ENCODE measurements at regions of chr16 and their contacts with region 1.

Region 1: DNA sequence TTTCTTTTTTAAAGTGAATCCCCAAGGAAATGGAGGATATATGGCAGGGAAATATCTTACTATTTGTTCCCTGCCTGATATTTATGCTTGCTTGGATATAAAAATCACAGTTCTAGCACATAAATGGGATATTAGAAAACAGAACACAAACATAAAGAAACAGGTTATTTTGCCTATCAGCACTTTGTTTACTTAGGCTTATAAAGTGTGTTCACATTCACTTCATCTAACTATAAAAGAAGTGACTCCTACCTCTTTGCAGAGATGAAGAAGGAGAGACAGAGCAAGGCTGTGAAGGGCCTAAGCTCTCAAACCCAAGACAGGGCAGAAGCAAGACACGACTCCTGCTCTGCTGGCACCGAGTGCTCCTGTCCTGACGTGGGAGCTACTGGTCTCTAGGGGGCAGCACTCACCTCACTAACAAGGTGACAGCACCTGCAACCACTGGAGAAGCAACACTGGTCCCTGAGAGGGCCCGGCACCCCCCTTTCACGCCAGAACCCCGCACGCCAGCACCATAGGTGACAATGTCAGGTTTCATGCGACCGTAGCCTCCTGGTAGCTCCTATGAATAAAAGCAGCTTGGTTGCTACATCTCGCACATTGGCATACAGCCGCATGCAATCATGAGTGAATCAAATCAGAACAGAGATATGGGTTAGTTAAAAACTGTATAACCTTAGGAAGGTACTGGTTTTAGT is 32.0 kb downstream of the MBTPS1 start:
- DNase-seq: peak; percentile 28
- ATAC-seq: peak; percentile 90
- H3K4me3 ChIP-seq: no peak overlapping the region
- H3K27ac ChIP-seq: no peak overlapping the region
- H3K4me1 ChIP-seq: peaks cover 47% of the 10 kb centered on the region
- H3K27me3 ChIP-seq: no peaks in the 10 kb centered on the region
- CTCF ChIP-seq: peak; percentile 84 to 88 (median 84)
- EP300 ChIP-seq: no peak
- POLR2A ChIP-seq: peak; percentile 47; the same call in 1 of the 2 replicates
- RAD21 ChIP-seq: peak; percentile 73

Region 2: GRCh38 chr16:82681592-82681991 is 1403.1 kb before region 1 on chr16:
- CTCF ChIA-PET with region 1: no interaction called
- POLR2A ChIA-PET with region 1: no interaction called
- RAD21 ChIA-PET with region 1: no interaction called
- SMC1A ChIA-PET with region 1: no interaction called
- in situ Hi-C with region 1: no loop called
- intact Hi-C with region 1: no loop called
- DNase-seq: no peak
- ATAC-seq: no peak
- H3K4me3 ChIP-seq: no peak overlapping the region
- H3K27ac ChIP-seq: no peak overlapping the region
- H3K4me1 ChIP-seq: no peaks in the 10 kb centered on the region
- H3K27me3 ChIP-seq: peaks cover 0 to 1% of the 10 kb centered on the region in 2 experiments; a peak in 1 of 4 replicates
- CTCF ChIP-seq: no peak
- EP300 ChIP-seq: no peak
- POLR2A ChIP-seq: no peak
- RAD21 ChIP-seq: no peak

Region 3: DNA sequence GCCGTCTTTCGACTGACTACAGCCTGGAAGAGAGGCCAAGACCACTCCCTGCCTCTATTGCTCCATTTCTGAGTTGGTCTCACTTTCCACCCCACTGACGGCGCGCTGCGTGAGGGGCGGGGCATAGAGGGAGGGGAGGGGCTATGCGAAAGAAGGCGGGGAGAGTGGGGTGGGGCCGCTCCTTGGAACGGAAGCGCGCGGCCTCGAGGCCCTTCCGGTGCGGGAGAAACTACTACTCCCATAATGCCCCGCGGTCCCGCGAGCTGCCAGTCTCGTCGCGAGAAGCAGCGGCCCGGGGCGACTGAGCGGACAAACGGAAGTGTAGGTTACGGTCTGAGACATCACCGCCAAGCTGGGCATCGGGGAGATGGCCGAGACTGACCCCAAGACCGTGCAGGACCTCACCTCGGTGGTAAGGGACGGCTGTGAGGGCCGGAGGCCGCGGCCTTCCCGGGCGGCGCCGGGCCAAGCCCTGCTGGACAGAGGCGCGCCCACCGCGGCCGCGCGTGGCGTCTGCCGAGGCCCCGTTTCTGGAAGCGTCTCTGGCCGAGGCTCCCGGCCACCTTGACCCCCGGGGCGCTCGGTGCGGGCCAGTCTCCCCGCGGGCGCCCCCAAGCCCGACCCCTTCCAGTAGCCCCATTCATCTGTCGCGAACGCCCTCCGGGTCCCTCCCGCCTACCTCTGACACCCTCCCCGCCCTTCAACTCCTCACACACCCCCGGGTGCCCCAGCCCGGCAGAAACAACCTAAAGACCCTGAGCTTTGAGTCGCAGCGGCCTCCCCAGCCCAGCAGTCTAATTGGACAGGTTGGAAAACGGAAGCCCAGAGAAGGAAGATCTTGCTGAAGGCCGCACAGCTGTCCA is 276.8 kb before region 1 on chr16 and contains the start of gene HSBP1:
- CTCF ChIA-PET with region 1: no interaction called
- POLR2A ChIA-PET with region 1: no interaction called
- RAD21 ChIA-PET with region 1: no interaction called
- SMC1A ChIA-PET with region 1: no interaction called
- in situ Hi-C with region 1: no loop called
- intact Hi-C with region 1: no loop called
- DNase-seq: peak; percentile 67
- ATAC-seq: peak; percentile 99
- H3K4me3 ChIP-seq: peak within 1 kb of the TSS; percentile 96
- H3K27ac ChIP-seq: peak within 1 kb of the TSS; percentile 76
- H3K4me1 ChIP-seq: peaks cover 8% of the 10 kb centered on the region; the same call in 1 of the 2 replicates
- H3K27me3 ChIP-seq: no peaks in the 10 kb centered on the region
- CTCF ChIP-seq: no peak
- EP300 ChIP-seq: no peak
- POLR2A ChIP-seq: peak; percentile 87
- RAD21 ChIP-seq: no peak
- polyA plus RNA-seq, gene HSBP1: 240 to 263 TPM

Region 4: GRCh38 chr16:84116720-84117493 is 32.2 kb after region 1 on chr16 and contains the start of gene MBTPS1:
- CTCF ChIA-PET with region 1: interaction called, 58 read pairs
- POLR2A ChIA-PET with region 1: interaction called, 3 read pairs
- RAD21 ChIA-PET with region 1: interaction called, 9 read pairs
- SMC1A ChIA-PET with region 1: interaction called, 4 read pairs
- in situ Hi-C with region 1: no loop called
- intact Hi-C with region 1: no loop called
- DNase-seq: peak; percentile 91
- ATAC-seq: peak; percentile 95
- H3K4me3 ChIP-seq: peak within 1 kb of the TSS; percentile 93
- H3K27ac ChIP-seq: peak within 1 kb of the TSS; percentile 89
- H3K4me1 ChIP-seq: peaks cover 11% of the 10 kb centered on the region; the same call in 1 of the 2 replicates
- H3K27me3 ChIP-seq: no peaks in the 10 kb centered on the region
- CTCF ChIP-seq: 0 out of 6 replicates have a peak, but pooled peaks of 1 of the 3 experiments have one; percentile 20
- EP300 ChIP-seq: 0 out of 4 replicates have a peak, but pooled peaks of 1 of the 2 experiments have one; percentile 47
- POLR2A ChIP-seq: peak; percentile 93
- RAD21 ChIP-seq: no peak; the same call in 1 of the 2 replicates
- polyA plus RNA-seq, gene MBTPS1: 1.3 to 3.3 TPM

Region 5: DNA sequence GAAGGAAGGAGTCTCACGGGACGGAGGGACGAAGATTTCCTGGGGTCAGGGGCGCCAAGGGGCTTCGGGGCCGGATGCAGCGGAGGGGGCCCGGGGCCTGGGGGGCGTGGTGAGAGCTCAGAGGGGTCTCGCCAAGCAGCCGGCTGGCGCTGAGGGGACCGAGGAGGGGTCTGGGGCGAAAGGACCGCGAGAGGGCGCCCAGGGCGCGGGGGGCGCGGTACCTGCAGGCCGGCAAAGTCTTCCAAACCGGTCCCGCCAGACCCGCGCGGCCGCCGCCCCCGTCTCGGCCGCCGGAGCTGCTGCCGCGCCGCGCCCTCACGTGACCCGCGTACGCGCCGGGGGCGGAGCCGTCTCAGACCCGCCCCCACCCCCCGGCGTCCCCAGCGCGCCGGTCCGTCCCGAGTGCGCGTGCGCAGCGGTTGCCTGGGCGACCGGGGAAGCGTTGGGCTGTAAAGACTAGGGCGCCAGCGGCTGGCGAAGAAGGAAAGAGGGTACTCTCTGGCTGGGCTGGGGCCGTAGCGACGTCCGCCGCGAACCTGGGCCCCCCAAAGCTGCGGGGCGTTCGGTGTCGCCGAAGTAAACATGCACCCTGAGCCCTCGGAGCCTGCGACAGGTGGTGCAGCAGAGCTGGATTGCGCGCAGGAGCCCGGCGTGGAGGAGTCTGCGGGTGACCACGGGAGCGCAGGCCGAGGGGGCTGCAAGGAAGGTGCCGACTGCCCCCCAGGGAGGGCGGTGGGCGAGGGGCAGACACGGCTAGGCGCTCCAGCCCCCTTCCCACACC is 60.3 kb after region 1 on chr16 and contains the starts of genes DNAAF1 and HSDL1:
- CTCF ChIA-PET with region 1: interaction called, 7 read pairs
- POLR2A ChIA-PET with region 1: no interaction called
- RAD21 ChIA-PET with region 1: interaction called, 3 read pairs
- SMC1A ChIA-PET with region 1: interaction called, 5 read pairs
- in situ Hi-C with region 1: loop called (anchors 5 kb)
- intact Hi-C with region 1: no loop called
- DNase-seq: peak; percentile 32
- ATAC-seq: peak; percentile 94
- H3K4me3 ChIP-seq: peak within 1 kb of the TSS; percentile 91
- H3K27ac ChIP-seq: no peak within 1 kb of the TSS
- H3K4me1 ChIP-seq: no peaks in the 10 kb centered on the region
- H3K27me3 ChIP-seq: no peaks in the 10 kb centered on the region
- CTCF ChIP-seq: peak in 1 of 3 experiments; percentile 24; a peak in 1 of 6 replicates
- EP300 ChIP-seq: no peak
- POLR2A ChIP-seq: peak; percentile 61; the same call in 1 of the 2 replicates
- RAD21 ChIP-seq: no peak
- polyA plus RNA-seq, gene DNAAF1: 0.02 to 0.11 TPM
- polyA plus RNA-seq, gene HSDL1: 2.0 to 3.6 TPM

Region 6: DNA sequence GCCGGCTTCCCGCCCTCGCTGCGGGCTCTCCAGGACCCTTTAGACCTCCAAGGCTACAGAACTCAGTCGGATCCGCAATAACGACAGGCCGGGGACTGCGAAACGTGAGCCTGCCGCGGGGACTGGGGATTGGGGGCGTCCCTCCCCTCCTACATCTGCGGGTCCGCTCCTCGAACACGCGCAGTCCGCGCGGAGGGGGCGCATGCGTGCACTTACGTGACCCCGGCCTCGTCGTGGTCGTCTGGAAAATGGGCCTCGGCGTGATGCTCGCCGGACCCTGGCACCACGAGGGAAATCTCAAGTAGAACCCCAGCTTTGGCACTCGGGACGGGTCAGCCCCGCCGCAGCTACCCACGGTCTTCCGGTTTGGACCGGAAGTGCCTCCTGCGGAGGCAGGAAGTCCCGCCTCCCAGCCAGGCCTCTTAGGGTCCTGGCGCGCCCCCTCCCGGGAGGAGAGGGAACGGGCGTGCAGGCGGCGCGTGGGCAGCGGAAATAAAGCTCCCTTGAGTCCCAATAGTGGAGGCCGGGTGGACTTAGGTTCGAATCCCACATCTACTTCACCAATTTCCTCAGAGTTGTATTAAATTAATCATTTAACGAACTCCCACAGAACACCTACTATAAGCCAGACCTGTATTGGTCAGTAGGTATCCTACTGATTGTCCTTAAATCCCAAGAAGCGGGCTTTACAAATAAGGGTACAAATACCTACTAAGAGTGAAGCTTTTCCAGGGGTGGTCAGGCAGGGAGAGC is 102.1 kb after region 1 on chr16 and contains the start of gene TAF1C:
- CTCF ChIA-PET with region 1: interaction called, 102 read pairs
- POLR2A ChIA-PET with region 1: no interaction called
- RAD21 ChIA-PET with region 1: interaction called, 49 read pairs
- SMC1A ChIA-PET with region 1: interaction called, 61 read pairs
- in situ Hi-C with region 1: loop called (anchors 5 kb)
- intact Hi-C with region 1: loop called (anchors 2 kb)
- DNase-seq: peak; percentile 66
- ATAC-seq: peak; percentile 97
- H3K4me3 ChIP-seq: peak within 1 kb of the TSS; percentile 89
- H3K27ac ChIP-seq: peak within 1 kb of the TSS; percentile 86
- H3K4me1 ChIP-seq: no peaks in the 10 kb centered on the region
- H3K27me3 ChIP-seq: no peaks in the 10 kb centered on the region
- CTCF ChIP-seq: peak; percentile 94 to 99 (median 97); a peak in 5 of 6 replicates
- EP300 ChIP-seq: peak in 1 of 2 experiments; percentile 21; a peak in 1 of 4 replicates
- POLR2A ChIP-seq: peak; percentile 82
- RAD21 ChIP-seq: peak; percentile 84
- polyA plus RNA-seq, gene TAF1C: 0.98 to 2.0 TPM

Region 7: DNA sequence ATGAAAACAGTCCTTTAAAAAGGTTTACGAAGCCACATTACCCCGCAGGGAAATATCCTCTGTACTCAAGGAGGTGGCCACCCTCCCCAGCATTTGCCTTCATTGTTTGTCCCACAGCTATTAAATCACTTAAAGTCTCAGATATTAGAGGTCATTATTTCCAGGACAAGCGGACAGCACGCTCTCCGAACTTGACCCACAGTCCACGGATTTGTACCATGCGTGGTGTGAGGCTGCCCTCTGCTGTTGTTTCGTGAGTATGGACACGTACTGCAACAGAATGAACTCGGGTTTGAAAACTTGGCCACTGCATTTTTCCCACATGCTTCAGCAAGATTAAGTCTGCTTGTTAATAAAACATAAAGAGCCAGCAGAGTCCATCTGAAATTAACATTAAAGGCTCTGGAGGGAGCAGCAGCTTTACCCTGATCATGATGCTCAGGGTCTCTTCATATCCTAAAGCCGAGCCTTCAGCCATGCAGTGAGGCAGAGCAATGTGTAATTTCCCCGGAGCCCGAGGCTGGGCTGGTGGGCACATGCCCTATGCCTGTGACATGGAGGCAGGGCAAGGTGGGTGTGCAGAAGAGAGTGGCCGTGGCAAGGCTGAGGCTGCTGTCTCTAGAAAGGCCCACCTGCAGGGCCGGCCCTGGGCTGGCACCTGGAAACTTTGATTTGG is 400.0 kb after region 1 on chr16:
- CTCF ChIA-PET with region 1: no interaction called
- POLR2A ChIA-PET with region 1: no interaction called
- RAD21 ChIA-PET with region 1: no interaction called
- SMC1A ChIA-PET with region 1: no interaction called
- in situ Hi-C with region 1: no loop called
- intact Hi-C with region 1: loop called (anchors 5 kb)
- DNase-seq: no peak
- ATAC-seq: peak; percentile 40; the same call in 2 of the 3 replicates
- H3K4me3 ChIP-seq: no peak overlapping the region
- H3K27ac ChIP-seq: no peak overlapping the region
- H3K4me1 ChIP-seq: no peaks in the 10 kb centered on the region
- H3K27me3 ChIP-seq: no peaks in the 10 kb centered on the region
- CTCF ChIP-seq: peak; percentile 53 to 56 (median 55); a peak in 4 of 6 replicates
- EP300 ChIP-seq: no peak
- POLR2A ChIP-seq: no peak
- RAD21 ChIP-seq: peak; percentile 70